A549 (cell line): ENCODE measurements at regions of chr15 and their contacts with region 1.

Region 1: DNA sequence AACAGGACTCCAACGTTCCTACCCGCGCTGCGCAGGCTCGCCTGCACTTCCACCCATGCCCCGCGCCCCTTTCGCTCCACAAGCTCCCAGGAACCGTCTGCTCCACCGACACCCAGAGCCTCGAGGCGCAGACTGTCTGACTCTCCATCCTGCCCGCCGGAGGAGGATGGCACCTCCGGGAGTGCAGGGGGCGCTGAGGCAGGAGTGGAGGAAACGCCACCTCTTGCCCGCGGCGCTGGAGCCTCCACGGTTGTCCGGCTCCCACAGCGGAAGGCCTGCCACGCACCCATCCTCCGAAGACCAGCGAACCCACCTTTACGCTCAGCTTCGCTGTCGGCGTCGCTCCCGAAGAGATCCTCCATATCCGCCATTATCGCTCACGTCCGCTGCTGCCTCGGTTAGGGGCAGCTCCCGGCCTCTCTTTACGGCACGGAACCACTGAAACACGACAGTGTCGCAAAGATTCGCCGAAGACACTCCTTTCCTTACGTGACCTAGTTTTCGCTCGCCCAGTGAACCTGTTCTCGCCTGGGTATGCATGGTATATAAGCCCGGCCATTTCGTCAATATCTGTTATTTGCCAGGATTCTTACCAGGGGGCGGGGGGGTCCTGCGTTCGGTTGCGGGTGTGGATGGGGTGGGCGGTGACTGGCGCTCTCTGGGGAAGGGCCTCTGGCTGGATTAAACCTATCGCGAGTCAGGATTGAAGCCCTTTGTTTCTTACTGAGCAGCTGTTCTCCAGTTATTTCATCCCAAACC is at the start of gene LEO1:
- DNase-seq: peak; percentile 99
- ATAC-seq: peak; percentile 94 to 98
- H3K4me3 ChIP-seq: peak within 1 kb of the TSS; percentile 68
- H3K27ac ChIP-seq: peak within 1 kb of the TSS; percentile 83 to 95
- H3K4me1 ChIP-seq: peaks cover 13% of the 10 kb centered on the region
- CTCF ChIP-seq: peak; percentile 51
- EP300 ChIP-seq: no peak
- POLR2A ChIP-seq: peak; percentile 93
- RAD21 ChIP-seq: peak in 1 of 2 experiments; percentile 32; a peak in 1 of 5 replicates
- polyA plus RNA-seq, gene LEO1: 19.2 and 22.3 TPM in 2 replicates

Region 2: GRCh38 chr15:51750792-51751685 is 220.5 kb before region 1 on chr15 and contains the start of gene TMOD2:
- CTCF ChIA-PET with region 1: no interaction called
- POLR2A ChIA-PET with region 1: no interaction called
- DNase-seq: peak; percentile 34 to 51
- ATAC-seq: peak; percentile 88 to 91
- H3K4me3 ChIP-seq: peak within 1 kb of the TSS; percentile 94
- H3K27ac ChIP-seq: peak within 1 kb of the TSS; percentile 65 to 83; a peak in 5 of 6 replicates
- H3K4me1 ChIP-seq: peaks cover 3% of the 10 kb centered on the region; the same call in 1 of the 3 replicates
- CTCF ChIP-seq: no peak
- EP300 ChIP-seq: no peak
- POLR2A ChIP-seq: 0 out of 2 replicates have a peak, but pooled peaks have one; percentile 7
- RAD21 ChIP-seq: no peak
- polyA plus RNA-seq, gene TMOD2: 2.5 and 2.8 TPM in 2 replicates

Region 3: GRCh38 chr15:51982013-51982769 is 10.6 kb after region 1 on chr15:
- CTCF ChIA-PET with region 1: interaction called, 23 read pairs
- POLR2A ChIA-PET with region 1: interaction called, 30 read pairs
- DNase-seq: peak; percentile 83 to 89
- ATAC-seq: peak; percentile 94 to 96
- H3K4me3 ChIP-seq: peak overlapping the region; percentile 25; the same call in 2 of the 3 replicates
- H3K27ac ChIP-seq: peak overlapping the region; percentile 81 to 87
- H3K4me1 ChIP-seq: peaks cover 22% of the 10 kb centered on the region
- CTCF ChIP-seq: peak; percentile 97
- EP300 ChIP-seq: no peak
- POLR2A ChIP-seq: no peak
- RAD21 ChIP-seq: peak; percentile 96 to 98